H1 (cell line): ENCODE measurements at regions of chr3 and their contacts with region 1.

Region 1: GRCh38 chr3:16048435-16049318 is 125.8 kb upstream of the GALNT15 start:
- DNase-seq: peak in 1 of 2 experiments; percentile 2
- H3K4me3 ChIP-seq: no peak overlapping the region
- H3K27ac ChIP-seq: no peak overlapping the region
- H3K4me1 ChIP-seq: no peaks in the 10 kb centered on the region
- H3K27me3 ChIP-seq: no peaks in the 10 kb centered on the region
- CTCF ChIP-seq: peak; percentile 27 to 83 (median 74)
- EP300 ChIP-seq: no peak
- POLR2A ChIP-seq: no peak
- RAD21 ChIP-seq: peak; percentile 91 to 96

Region 2: DNA sequence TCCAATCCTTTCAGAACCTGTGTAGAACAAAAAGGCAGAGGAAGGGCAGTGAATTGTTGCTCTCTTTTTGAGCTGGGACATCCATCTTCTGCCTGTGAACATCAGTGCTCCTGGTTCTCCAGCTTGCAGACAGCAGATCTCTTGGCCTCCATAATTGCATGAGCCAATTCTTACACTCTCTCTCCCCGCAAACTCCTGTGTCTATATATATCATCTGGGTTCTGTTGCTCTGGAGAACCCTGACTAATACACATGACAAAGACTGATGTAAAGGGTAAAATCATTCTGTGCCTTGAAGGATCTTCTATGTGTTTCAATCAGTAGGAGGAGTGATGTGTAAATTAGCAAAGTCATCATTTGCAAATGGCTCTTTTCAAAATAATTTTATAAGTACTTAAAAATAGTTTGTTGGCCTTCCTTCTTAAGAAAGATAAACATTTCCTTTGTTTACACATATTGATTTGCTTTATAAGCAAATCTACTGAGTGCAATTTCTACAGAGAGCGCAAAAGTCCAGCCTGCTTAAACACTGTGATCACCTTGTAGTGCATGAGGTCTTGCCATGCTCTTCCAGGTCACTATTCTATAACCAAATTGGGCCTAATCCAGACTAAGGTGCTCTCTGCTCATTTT is 96.0 kb before region 1 on chr3:
- CTCF ChIA-PET with region 1: no interaction called
- POLR2A ChIA-PET with region 1: no interaction called
- DNase-seq: no peak
- H3K4me3 ChIP-seq: no peak overlapping the region
- H3K27ac ChIP-seq: no peak overlapping the region
- H3K4me1 ChIP-seq: no peaks in the 10 kb centered on the region
- H3K27me3 ChIP-seq: no peaks in the 10 kb centered on the region
- CTCF ChIP-seq: no peak
- EP300 ChIP-seq: no peak
- POLR2A ChIP-seq: no peak
- RAD21 ChIP-seq: no peak

Region 3: GRCh38 chr3:16060358-16060852 is 11.7 kb after region 1 on chr3:
- CTCF ChIA-PET with region 1: interaction called, 30 read pairs
- POLR2A ChIA-PET with region 1: no interaction called
- DNase-seq: peak in 1 of 2 experiments; percentile 38
- H3K4me3 ChIP-seq: no peak overlapping the region
- H3K27ac ChIP-seq: no peak overlapping the region
- H3K4me1 ChIP-seq: no peaks in the 10 kb centered on the region
- H3K27me3 ChIP-seq: no peaks in the 10 kb centered on the region
- CTCF ChIP-seq: peak in 2 of 3 experiments; percentile 26; a peak in 2 of 4 replicates
- EP300 ChIP-seq: no peak
- POLR2A ChIP-seq: no peak
- RAD21 ChIP-seq: peak in 1 of 2 experiments; percentile 18; a peak in 2 of 4 replicates

Region 4: GRCh38 chr3:16177962-16178627 is 129.4 kb after region 1 on chr3:
- CTCF ChIA-PET with region 1: interaction called, 44 read pairs
- POLR2A ChIA-PET with region 1: no interaction called
- DNase-seq: peak; percentile 75 to 96
- H3K4me3 ChIP-seq: no peak overlapping the region
- H3K27ac ChIP-seq: no peak overlapping the region
- H3K4me1 ChIP-seq: peaks cover 0 to 3% (median 0%) of the 10 kb centered on the region in 4 experiments; a peak in 1 of 7 replicates
- H3K27me3 ChIP-seq: no peaks in the 10 kb centered on the region
- CTCF ChIP-seq: peak; percentile 97 to 100 (median 99)
- EP300 ChIP-seq: peak in 1 of 2 experiments; percentile 25; a peak in 1 of 3 replicates
- POLR2A ChIP-seq: no peak
- RAD21 ChIP-seq: peak; percentile 98

Region 5: DNA sequence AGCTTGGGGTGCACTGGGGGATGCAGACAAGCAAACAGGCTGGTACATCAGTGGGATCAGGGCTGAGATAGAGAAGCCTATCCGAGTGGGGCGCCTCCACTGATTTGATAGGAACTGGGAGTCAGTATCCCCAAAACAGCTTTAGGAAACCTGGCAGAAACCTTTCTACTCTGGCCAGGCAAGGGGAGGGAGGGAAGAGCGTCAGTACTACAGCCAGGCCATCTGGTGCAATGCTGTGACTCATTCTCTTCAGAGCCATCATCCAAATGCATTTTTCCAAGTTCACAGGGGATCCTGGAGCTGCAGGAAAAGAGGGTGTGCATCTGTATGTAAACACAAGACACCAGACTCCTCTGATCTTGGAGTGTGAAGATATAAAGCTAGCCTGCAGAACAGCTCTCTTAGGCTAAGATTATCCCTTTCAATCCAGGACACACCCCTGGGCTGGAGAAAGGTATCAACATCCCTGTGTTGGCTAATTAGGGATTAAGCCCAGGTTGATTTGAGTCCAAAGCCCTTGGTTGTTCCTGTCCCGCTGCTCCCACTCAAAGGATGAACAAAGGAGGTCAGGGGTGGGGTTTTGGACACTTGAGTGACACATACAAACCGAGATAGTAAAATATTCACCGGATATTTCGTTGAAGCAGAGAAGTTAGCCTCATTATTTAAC is 135.1 kb after region 1 on chr3:
- CTCF ChIA-PET with region 1: interaction called, 44 read pairs
- POLR2A ChIA-PET with region 1: no interaction called
- DNase-seq: no peak
- H3K4me3 ChIP-seq: no peak overlapping the region
- H3K27ac ChIP-seq: no peak overlapping the region
- H3K4me1 ChIP-seq: peaks cover 0 to 3% (median 0%) of the 10 kb centered on the region in 4 experiments; a peak in 1 of 7 replicates
- H3K27me3 ChIP-seq: no peaks in the 10 kb centered on the region
- CTCF ChIP-seq: no peak
- EP300 ChIP-seq: no peak
- POLR2A ChIP-seq: no peak
- RAD21 ChIP-seq: no peak

Region 6: GRCh38 chr3:16247276-16248061 is 198.8 kb after region 1 on chr3:
- CTCF ChIA-PET with region 1: interaction called, 50 read pairs
- POLR2A ChIA-PET with region 1: no interaction called
- DNase-seq: peak; percentile 49 to 81
- H3K4me3 ChIP-seq: no peak overlapping the region
- H3K27ac ChIP-seq: no peak overlapping the region
- H3K4me1 ChIP-seq: 0 out of 7 replicates have a peak, but pooled peaks cover 0 to 4% (median 0%) of the 10 kb centered on the region in 4 experiments
- H3K27me3 ChIP-seq: no peaks in the 10 kb centered on the region
- CTCF ChIP-seq: peak; percentile 77 to 93 (median 93)
- EP300 ChIP-seq: no peak
- POLR2A ChIP-seq: no peak
- RAD21 ChIP-seq: peak; percentile 95

Region 7: GRCh38 chr3:16253601-16254000 is 204.9 kb after region 1 on chr3:
- CTCF ChIA-PET with region 1: interaction called, 50 read pairs
- POLR2A ChIA-PET with region 1: no interaction called
- DNase-seq: no peak
- H3K4me3 ChIP-seq: no peak overlapping the region
- H3K27ac ChIP-seq: no peak overlapping the region
- H3K4me1 ChIP-seq: no peaks in the 10 kb centered on the region
- H3K27me3 ChIP-seq: no peaks in the 10 kb centered on the region
- CTCF ChIP-seq: no peak
- EP300 ChIP-seq: no peak
- POLR2A ChIP-seq: no peak
- RAD21 ChIP-seq: no peak